HEK293T (cell line): ENCODE measurements at regions of chr19 and their contacts with region 1.

Region 1: GRCh38 chr19:10523135-10523636 is 5.9 kb upstream of the S1PR5 start:
- DNase-seq: no peak

Region 2: DNA sequence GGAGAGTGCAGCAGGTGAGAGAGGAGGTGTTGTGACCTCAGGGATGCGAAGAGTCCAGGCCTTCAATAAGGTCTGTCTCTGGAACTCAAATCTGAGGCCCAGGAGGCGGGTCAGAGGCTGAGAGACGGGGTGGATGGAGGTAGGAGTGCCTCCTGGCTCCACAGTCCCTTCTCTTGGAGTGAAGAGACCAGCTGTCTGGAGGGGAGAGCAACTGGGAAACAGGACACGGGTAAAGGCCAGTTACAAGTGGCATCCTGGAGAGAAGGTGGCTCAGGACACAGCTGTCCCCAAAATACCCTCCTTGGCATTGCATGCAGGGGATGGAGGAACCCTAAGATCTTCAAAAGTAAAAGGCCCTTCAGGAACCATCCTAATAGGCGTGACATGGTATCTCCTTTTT is 83.6 kb before region 1 on chr19:
- CTCF ChIA-PET with region 1: no interaction called
- POLR2A ChIA-PET with region 1: no interaction called
- DNase-seq: no peak

Region 3: GRCh38 chr19:10505583-10506229 is 17.5 kb before region 1 on chr19:
- CTCF ChIA-PET with region 1: interaction called, 11 read pairs
- POLR2A ChIA-PET with region 1: interaction called, 3 read pairs
- DNase-seq: peak; percentile 76